Colonic mucosa (tissue), 4 donors: ENCODE measurements at regions of chr1 and their contacts with region 1.

Region 1: DNA sequence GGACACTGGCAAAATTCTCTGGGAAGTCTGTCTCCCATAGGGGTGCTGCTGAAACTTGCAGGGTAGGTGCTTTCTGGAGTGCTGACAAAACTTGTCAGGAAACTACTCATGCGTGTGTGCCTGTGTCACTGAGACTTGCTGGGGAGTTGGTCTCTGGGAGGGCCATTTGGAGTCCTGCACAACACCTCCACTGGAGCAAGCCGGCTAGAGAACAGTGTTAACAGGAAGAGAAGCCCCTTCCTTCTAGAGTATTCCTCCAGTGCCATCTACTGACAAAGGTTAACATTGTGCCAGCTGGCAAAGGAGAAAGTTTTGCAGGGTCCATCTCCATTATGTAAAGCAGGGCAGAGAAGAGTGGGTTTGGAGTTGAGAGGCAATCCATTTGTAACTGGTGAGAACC is 30.0 kb downstream of the ZMYM4 start:
- DNase-seq: peak; percentile 27
- H3K4me3 ChIP-seq: no peak overlapping the region
- H3K27ac ChIP-seq: no peak overlapping the region
- H3K4me1 ChIP-seq: no peaks in the 10 kb centered on the region
- H3K27me3 ChIP-seq: no peaks in the 10 kb centered on the region
- CTCF ChIP-seq: peak; percentile 17

Region 2: DNA sequence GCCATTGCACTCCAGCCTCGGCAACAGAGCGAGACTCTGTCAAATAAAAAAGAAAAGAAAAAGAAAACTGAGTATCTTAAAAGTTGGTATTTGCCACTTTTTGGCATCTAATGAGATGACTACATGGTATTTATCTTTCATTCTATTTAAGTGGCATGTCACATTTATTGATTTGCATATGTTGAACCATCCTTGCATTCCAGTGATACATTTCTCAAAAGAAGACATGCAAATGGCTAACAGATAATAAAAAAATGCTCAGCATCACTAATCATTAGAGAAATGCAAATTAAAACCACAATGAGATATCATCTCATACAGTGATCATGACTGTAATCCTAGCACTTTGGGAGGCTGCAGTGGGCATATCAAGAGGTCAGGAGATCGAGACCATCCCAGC is 133.6 kb before region 1 on chr1:
- intact Hi-C with region 1: no loop called
- DNase-seq: no peak
- H3K4me3 ChIP-seq: no peak overlapping the region
- H3K27ac ChIP-seq: no peak overlapping the region
- H3K4me1 ChIP-seq: no peaks in the 10 kb centered on the region
- H3K27me3 ChIP-seq: no peaks in the 10 kb centered on the region
- CTCF ChIP-seq: no peak

Region 3: DNA sequence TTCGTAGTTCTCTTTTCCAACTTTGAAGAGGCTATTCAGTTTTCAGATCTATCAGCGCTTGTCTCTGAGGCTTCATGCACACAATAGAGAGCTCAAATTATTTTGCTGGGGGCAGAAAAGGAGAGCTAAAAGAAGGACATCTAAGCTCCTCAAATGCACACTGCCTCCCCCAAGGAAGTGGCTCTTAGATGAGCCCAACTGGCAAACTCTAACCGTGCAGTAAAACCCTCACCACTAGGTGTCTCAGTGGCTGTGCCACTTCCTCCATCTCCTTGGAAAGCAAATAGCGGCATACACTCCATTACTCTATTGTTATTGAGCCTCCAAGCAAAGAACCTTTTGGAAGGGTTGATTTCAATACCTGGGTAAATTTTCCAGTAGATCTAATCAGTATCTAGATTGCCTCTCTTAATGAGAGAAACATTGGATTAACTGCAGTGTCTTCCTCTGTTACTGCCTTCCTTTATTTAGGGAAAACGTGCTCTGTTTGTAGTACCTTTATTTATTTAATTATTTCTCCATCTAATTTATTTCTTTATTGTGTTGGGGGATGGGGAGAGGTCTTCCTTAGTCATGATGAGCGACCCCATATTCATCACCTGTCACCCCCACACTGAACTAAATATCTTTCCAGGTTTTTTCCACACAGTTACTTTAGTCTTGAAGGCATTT is 96.3 kb before region 1 on chr1:
- intact Hi-C with region 1: loop called (anchors 5 kb)
- DNase-seq: peak; percentile 76
- H3K4me3 ChIP-seq: no peak overlapping the region
- H3K27ac ChIP-seq: no peak overlapping the region
- H3K4me1 ChIP-seq: no peaks in the 10 kb centered on the region
- H3K27me3 ChIP-seq: no peaks in the 10 kb centered on the region
- CTCF ChIP-seq: peak; percentile 71

Region 4: DNA sequence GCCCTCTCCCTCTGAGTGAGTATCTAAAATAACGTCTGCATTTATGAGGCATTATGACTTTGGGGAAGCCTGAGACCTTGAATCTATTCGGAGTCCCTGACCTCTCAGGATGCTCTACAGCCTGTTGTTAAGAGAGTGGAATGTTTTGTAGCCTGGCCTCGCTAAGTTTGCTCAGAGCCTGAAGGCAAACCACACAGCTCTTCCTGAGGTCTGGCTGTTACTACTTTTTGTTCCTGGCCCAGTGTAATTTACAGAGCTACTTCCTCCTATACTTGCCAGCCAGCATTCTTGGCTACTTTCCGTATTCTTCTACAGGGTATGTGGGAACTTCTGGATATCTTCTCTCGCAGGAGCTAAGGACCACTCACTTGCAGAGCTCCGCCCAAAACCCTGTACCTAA is 33.6 kb before region 1 on chr1:
- intact Hi-C with region 1: no loop called
- DNase-seq: peak; percentile 35
- H3K4me3 ChIP-seq: no peak overlapping the region
- H3K27ac ChIP-seq: peak overlapping the region; percentile 38
- H3K4me1 ChIP-seq: no peaks in the 10 kb centered on the region
- H3K27me3 ChIP-seq: no peaks in the 10 kb centered on the region
- CTCF ChIP-seq: no peak